Psoas muscle (tissue), 8 donors: ENCODE measurements at regions of chr22 and their contacts with region 1.

Region 1: GRCh38 chr22:28951969-28952521 is 68.7 kb downstream of the ZNRF3 start:
- DNase-seq: no peak
- ATAC-seq: peak; percentile 49 to 73 (median 60)
- H3K4me3 ChIP-seq: no peak overlapping the region
- H3K27ac ChIP-seq: peak overlapping the region; percentile 44
- H3K4me1 ChIP-seq: peaks cover 65% of the 10 kb centered on the region
- H3K27me3 ChIP-seq: no peaks in the 10 kb centered on the region
- CTCF ChIP-seq: peak; percentile 18

Region 2: GRCh38 chr22:28759861-28760560 is 192.0 kb before region 1 on chr22:
- intact Hi-C with region 1: no loop called
- DNase-seq: no peak
- ATAC-seq: no peak
- H3K4me3 ChIP-seq: no peak overlapping the region
- H3K27ac ChIP-seq: no peak overlapping the region
- H3K4me1 ChIP-seq: no peaks in the 10 kb centered on the region
- H3K27me3 ChIP-seq: no peaks in the 10 kb centered on the region
- CTCF ChIP-seq: no peak

Region 3: DNA sequence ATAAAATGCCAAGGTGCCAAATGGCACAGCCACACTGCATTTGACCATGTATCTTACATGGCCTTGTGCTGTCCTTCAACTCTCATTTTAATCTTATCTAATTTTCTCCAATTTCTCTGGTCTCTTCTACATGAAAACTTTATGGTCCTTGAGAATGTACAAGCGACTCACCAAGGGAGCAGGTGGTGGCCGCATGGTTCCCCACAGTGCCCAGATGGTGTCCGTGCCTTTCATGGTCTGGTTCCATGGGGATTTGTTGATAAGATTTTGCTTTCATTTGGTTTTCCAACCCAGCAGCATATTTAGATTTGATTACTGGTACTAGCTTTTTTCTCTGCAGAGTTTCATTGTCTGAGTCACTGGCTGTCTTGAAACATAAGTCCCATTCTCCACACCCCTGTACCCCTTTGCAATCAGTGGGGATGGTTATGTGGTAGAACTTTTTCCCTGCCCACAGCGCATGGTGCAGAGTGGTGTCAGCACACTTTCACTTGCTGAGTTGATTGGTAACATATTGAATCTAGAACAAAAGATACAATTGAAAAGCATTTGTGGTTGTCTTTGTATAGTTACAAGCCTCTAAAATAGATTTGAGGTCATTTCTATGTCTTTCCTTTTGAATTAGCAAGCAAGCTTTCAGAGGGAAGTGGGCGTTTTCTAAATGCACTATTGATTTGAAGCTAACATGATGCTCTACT is 44.6 kb before region 1 on chr22:
- intact Hi-C with region 1: loop called in 1 of 2 experiments (anchors 5 kb)
- DNase-seq: no peak
- ATAC-seq: no peak
- H3K4me3 ChIP-seq: no peak overlapping the region
- H3K27ac ChIP-seq: no peak overlapping the region
- H3K4me1 ChIP-seq: peaks cover 68% of the 10 kb centered on the region
- H3K27me3 ChIP-seq: no peaks in the 10 kb centered on the region
- CTCF ChIP-seq: no peak

Region 4: GRCh38 chr22:29346659-29347058 is 394.6 kb after region 1 on chr22:
- intact Hi-C with region 1: no loop called
- DNase-seq: peak in 1 of 2 donors; percentile 77
- ATAC-seq: peak in 3 of 4 donors; percentile 14 to 48 (median 37)
- H3K4me3 ChIP-seq: no peak overlapping the region
- H3K27ac ChIP-seq: peak overlapping the region; percentile 61
- H3K4me1 ChIP-seq: peaks cover 64% of the 10 kb centered on the region
- H3K27me3 ChIP-seq: no peaks in the 10 kb centered on the region
- CTCF ChIP-seq: no peak